PC-3 (cell line): ENCODE measurements at regions of chr3 and their contacts with region 1.

Region 1: DNA sequence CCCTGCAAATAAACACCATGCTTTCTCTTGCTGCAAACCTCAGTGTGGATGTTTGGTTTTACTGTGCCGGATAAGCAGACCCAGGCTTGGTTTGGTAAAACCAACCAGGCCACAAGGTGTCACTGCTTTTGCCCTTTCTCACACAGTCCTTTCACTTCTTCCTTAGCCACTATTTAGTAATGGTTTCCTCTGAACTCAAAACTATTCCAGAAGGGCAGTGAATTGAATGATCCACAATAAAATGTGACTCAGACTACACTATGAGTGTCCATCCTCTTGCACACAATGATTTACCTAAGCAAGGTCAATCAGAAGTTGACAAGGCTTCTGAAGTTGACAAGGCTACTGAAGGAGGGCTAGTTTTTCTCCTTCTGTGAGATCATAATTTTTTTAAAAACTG is 552.4 kb upstream of the CCDC54 start:
- DNase-seq: peak; percentile 77
- ATAC-seq: peak; percentile 97
- H3K4me3 ChIP-seq: no peak overlapping the region
- H3K27ac ChIP-seq: no peak overlapping the region
- H3K4me1 ChIP-seq: peaks cover 10% of the 10 kb centered on the region; the same call in 1 of the 2 replicates
- H3K27me3 ChIP-seq: no peaks in the 10 kb centered on the region
- CTCF ChIP-seq: peak; percentile 71

Region 2: DNA sequence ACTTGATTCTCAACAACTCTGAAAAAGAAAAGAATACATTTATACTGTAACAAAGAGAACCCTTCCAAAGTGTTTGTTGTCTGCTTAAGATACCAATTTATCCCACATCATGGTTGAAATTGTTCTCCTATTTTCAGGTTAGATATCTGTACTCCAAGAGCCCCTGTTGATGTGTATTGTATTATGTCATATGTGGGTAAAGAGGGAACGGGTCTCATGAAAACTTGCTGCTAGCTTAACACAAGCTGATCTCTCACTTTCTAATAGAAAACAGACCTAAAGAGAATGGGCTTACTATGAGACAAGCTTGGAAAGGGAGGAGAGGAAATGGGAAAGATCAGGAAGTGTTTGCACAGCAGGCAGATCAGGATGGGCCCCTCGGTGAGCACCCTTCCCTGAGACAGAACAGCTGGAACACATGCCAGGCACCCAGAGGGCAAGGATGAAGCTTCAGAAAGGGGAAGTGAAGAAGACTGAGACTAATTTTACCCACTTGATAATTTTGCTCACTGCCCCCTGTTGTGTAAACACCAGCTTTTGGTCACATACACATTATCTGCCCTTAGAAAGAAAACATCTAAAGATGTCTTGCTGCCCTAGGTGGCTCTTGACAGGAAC is 195.5 kb before region 1 on chr3:
- CTCF ChIA-PET with region 1: no interaction called
- POLR2A ChIA-PET with region 1: no interaction called
- intact Hi-C with region 1: loop called (anchors 10 kb)
- DNase-seq: no peak
- ATAC-seq: no peak
- H3K4me3 ChIP-seq: no peak overlapping the region
- H3K27ac ChIP-seq: no peak overlapping the region
- H3K4me1 ChIP-seq: no peaks in the 10 kb centered on the region; the same call in 1 of the 2 replicates
- H3K27me3 ChIP-seq: no peaks in the 10 kb centered on the region
- CTCF ChIP-seq: no peak

Region 3: GRCh38 chr3:106839576-106840280 is 14.9 kb after region 1 on chr3:
- CTCF ChIA-PET with region 1: no interaction called
- POLR2A ChIA-PET with region 1: no interaction called
- intact Hi-C with region 1: no loop called
- DNase-seq: no peak
- ATAC-seq: no peak
- H3K4me3 ChIP-seq: no peak overlapping the region
- H3K27ac ChIP-seq: no peak overlapping the region
- H3K4me1 ChIP-seq: no peaks in the 10 kb centered on the region
- H3K27me3 ChIP-seq: no peaks in the 10 kb centered on the region
- CTCF ChIP-seq: no peak

Region 4: GRCh38 chr3:107064445-107065060 is 239.7 kb after region 1 on chr3:
- CTCF ChIA-PET with region 1: interaction called, 4 read pairs
- POLR2A ChIA-PET with region 1: no interaction called
- intact Hi-C with region 1: loop called (anchors 1 kb)
- DNase-seq: peak; percentile 91
- ATAC-seq: peak; percentile 84
- H3K4me3 ChIP-seq: no peak overlapping the region
- H3K27ac ChIP-seq: no peak overlapping the region
- H3K4me1 ChIP-seq: peaks cover 16% of the 10 kb centered on the region
- H3K27me3 ChIP-seq: no peaks in the 10 kb centered on the region
- CTCF ChIP-seq: peak; percentile 95